ENCODE measurements at regions of chr9 and their contacts with region 1.

Region 1: DNA sequence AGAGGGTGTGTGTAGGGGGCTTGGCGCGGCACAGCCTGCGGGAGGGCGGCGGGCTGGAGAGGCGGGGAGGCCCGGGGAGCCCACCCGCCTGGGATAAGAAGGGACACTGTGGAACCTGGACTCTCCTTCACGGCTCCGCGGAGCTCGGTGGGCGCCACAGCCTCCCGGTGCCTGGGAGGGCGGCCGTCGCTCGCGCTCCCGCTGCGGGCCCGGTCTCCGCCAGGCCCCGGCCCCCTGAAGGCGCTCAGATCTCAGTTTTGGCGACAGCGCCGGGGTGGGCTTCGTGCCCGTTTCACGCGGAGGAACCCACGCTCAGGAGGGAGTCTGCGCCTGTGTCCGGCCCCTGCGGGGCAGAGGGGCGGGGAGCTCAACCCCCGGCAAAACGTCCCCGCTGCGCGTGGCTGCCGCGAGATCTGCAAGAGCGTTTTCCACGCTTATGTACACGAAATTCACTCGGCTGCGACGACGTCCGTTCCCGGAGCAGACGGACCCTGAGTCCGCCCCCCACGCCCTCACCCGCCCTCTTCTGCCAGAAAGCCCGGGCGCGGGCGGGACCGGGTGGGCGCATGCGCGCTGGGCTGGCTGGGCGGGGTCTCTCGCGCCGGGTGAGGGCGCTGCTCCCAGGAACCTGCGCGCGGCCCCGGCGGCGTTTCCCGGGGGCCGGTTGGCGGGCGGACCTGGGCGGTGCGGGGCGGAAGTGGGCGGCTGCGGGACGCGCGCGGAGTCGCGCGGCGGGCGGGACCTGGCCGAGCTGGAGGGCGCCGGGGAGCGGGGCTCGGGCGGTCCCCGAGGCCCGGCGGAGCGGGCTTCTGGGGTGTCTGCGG is at the start of gene NELFB:
- DNase-seq: peak; percentile 89 to 100 (median 95)
- ATAC-seq: peak; percentile 97
- H3K4me3 ChIP-seq: peak within 1 kb of the TSS; percentile 91
- H3K4me3 Mint-ChIP-seq: peak within 1 kb of the TSS; percentile 79 to 94 (median 88)
- H3K27ac ChIP-seq: peak within 1 kb of the TSS; percentile 70
- H3K27ac Mint-ChIP-seq: peak within 1 kb of the TSS in 7 of 9 donors; percentile 65 to 91 (median 82)
- H3K4me1 ChIP-seq: peaks cover 11% of the 10 kb centered on the region in 2 donors
- H3K4me1 Mint-ChIP-seq: peaks cover 0 to 22% (median 17%) of the 10 kb centered on the region in 7 donors
- H3K27me3 ChIP-seq: no peaks in the 10 kb centered on the region
- H3K27me3 Mint-ChIP-seq: no peaks in the 10 kb centered on the region
- total RNA-seq, gene NELFB: 33.4 to 64.2 (median 38.9) TPM

Region 2: GRCh38 chr9:136275655-136276429 is 979.0 kb before region 1 on chr9:
- CTCF ChIA-PET with region 1: no interaction called
- POLR2A ChIA-PET with region 1: no interaction called
- intact Hi-C with region 1: no loop called
- DNase-seq: no peak
- ATAC-seq: no peak
- H3K4me3 ChIP-seq: no peak overlapping the region
- H3K4me3 Mint-ChIP-seq: no peak overlapping the region
- H3K27ac ChIP-seq: no peak overlapping the region
- H3K27ac Mint-ChIP-seq: no peak overlapping the region
- H3K4me1 ChIP-seq: no peaks in the 10 kb centered on the region
- H3K4me1 Mint-ChIP-seq: no peaks in the 10 kb centered on the region
- H3K27me3 ChIP-seq: peaks cover 0 to 2% of the 10 kb centered on the region in 2 donors
- H3K27me3 Mint-ChIP-seq: peaks cover 0 to 7% (median 0%) of the 10 kb centered on the region in 5 donors

Region 3: GRCh38 chr9:137188490-137189296 is 66.1 kb before region 1 on chr9 and contains the starts of genes ANAPC2 and SSNA1:
- CTCF ChIA-PET with region 1: no interaction called
- POLR2A ChIA-PET with region 1: interaction called, 6 read pairs
- intact Hi-C with region 1: loop called in 1 of 2 experiments (anchors 1 kb)
- DNase-seq: peak; percentile 86 to 99 (median 93)
- ATAC-seq: peak; percentile 91
- H3K4me3 ChIP-seq: peak within 1 kb of the TSS; percentile 98
- H3K4me3 Mint-ChIP-seq: peak within 1 kb of the TSS; percentile 91 to 99 (median 92)
- H3K27ac ChIP-seq: peak within 1 kb of the TSS; percentile 99
- H3K27ac Mint-ChIP-seq: peak within 1 kb of the TSS; percentile 85 to 96 (median 93)
- H3K4me1 ChIP-seq: peaks cover 30 to 32% of the 10 kb centered on the region in 2 donors
- H3K4me1 Mint-ChIP-seq: peaks cover 14 to 61% (median 32%) of the 10 kb centered on the region in 7 donors
- H3K27me3 ChIP-seq: no peaks in the 10 kb centered on the region
- H3K27me3 Mint-ChIP-seq: no peaks in the 10 kb centered on the region
- total RNA-seq, gene ANAPC2: 77.3 to 147 (median 134) TPM
- total RNA-seq, gene SSNA1: 37.9 to 75.6 (median 46.8) TPM

Region 4: GRCh38 chr9:137229903-137230704 is 24.7 kb before region 1 on chr9:
- CTCF ChIA-PET with region 1: no interaction called
- POLR2A ChIA-PET with region 1: no interaction called
- intact Hi-C with region 1: no loop called
- DNase-seq: no peak
- ATAC-seq: no peak
- H3K4me3 ChIP-seq: no peak overlapping the region
- H3K4me3 Mint-ChIP-seq: no peak overlapping the region
- H3K27ac ChIP-seq: no peak overlapping the region
- H3K27ac Mint-ChIP-seq: no peak overlapping the region
- H3K4me1 ChIP-seq: peaks cover 4 to 5% of the 10 kb centered on the region in 2 donors
- H3K4me1 Mint-ChIP-seq: peaks cover 5 to 7% (median 5%) of the 10 kb centered on the region in 7 donors
- H3K27me3 ChIP-seq: no peaks in the 10 kb centered on the region
- H3K27me3 Mint-ChIP-seq: peaks cover 0 to 11% (median 6%) of the 10 kb centered on the region in 5 donors

Region 5: DNA sequence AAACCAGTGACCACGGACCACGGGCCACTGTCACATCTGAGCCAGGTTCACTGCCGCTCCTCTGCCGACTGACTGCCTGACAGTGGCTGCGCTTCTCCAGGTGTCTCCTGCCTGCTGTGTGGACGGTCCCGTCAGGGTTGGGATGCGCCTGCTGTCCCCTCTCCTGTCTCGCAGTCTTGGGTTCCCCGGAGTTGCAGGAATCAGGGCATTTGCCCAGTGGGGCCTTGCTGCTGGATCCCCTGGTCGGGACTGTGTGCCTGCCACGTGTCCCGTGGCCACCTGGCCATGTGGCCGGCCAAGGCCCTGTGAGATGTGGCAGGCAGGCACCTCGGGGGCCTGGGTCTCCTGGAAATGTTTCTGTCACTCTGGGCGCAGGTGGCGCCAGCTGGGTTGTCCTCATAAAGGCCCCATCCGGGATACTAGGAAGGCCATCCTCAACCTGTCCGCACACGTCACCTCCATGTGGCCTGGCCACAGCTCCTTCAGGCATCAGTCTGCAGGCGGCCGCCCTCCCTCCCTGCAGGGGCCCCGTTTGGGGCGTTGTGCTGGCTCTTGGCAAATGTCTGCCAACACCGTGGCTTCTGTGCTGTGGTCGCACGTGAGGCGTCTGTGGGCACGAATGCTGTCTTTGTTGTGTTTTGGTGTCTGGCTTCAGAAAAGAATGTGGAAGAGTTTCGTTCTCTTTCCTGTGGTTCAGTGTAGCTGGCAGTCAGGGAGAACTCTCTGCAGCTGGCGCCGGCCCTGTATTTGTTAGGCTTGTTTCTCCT is 16.3 kb after region 1 on chr9:
- CTCF ChIA-PET with region 1: no interaction called
- POLR2A ChIA-PET with region 1: interaction called, 6 read pairs
- intact Hi-C with region 1: loop called in 1 of 2 experiments (anchors 2 kb)
- DNase-seq: peak in 7 of 9 donors; percentile 39 to 67 (median 58)
- ATAC-seq: peak; percentile 67
- H3K4me3 ChIP-seq: no peak overlapping the region
- H3K4me3 Mint-ChIP-seq: peak overlapping the region; percentile 30 to 78 (median 57)
- H3K27ac ChIP-seq: no peak overlapping the region
- H3K27ac Mint-ChIP-seq: peak overlapping the region in 6 of 9 donors; percentile 19 to 82 (median 64)
- H3K4me1 ChIP-seq: peaks cover 0 to 16% of the 10 kb centered on the region in 2 donors
- H3K4me1 Mint-ChIP-seq: peaks cover 14 to 27% (median 16%) of the 10 kb centered on the region in 7 donors
- H3K27me3 ChIP-seq: no peaks in the 10 kb centered on the region
- H3K27me3 Mint-ChIP-seq: no peaks in the 10 kb centered on the region